Sigmoid colon (tissue), 7 donors: ENCODE measurements at regions of chr11 and their contacts with region 1.

Region 1: GRCh38 chr11:116276051-116277044 is 496.4 kb downstream of the BUD13 start:
- DNase-seq: peak; percentile 85
- H3K4me3 ChIP-seq: peak overlapping the region in 3 of 4 donors; percentile 27 to 35 (median 30)
- H3K27ac ChIP-seq: no peak overlapping the region
- H3K4me1 ChIP-seq: peaks cover 0 to 12% (median 3%) of the 10 kb centered on the region in 4 donors
- H3K27me3 ChIP-seq: no peaks in the 10 kb centered on the region
- CTCF ChIP-seq: peak; percentile 91 to 98 (median 96)
- EP300 ChIP-seq: no peak
- POLR2A ChIP-seq: no peak

Region 2: GRCh38 chr11:115324581-115325432 is 951.5 kb before region 1 on chr11:
- intact Hi-C with region 1: loop called (anchors 2 kb)
- DNase-seq: no peak
- H3K4me3 ChIP-seq: no peak overlapping the region
- H3K27ac ChIP-seq: no peak overlapping the region
- H3K4me1 ChIP-seq: peaks cover 0 to 6% (median 2%) of the 10 kb centered on the region in 4 donors
- H3K27me3 ChIP-seq: no peaks in the 10 kb centered on the region
- CTCF ChIP-seq: peak; percentile 57 to 81 (median 68)
- EP300 ChIP-seq: no peak
- POLR2A ChIP-seq: no peak

Region 3: DNA sequence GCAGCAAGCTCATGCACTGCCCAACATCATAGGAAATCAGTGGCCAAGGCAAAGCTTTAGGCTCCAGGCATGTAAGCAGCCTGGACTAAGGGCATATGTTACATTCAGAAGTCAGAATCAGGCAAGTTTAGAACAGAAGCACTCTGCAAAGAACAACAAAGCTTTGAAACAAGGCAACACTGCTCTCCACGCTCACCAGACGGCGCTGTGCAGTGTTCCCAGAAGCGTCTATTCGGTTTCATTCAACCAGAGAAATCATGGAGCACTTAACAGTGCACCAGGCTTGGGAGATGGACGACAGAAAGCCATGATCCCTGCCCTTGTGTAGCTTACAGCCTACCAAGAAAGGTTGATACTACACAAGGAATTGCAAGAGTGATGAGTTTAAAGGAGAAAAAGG is 59.3 kb before region 1 on chr11:
- intact Hi-C with region 1: loop called (anchors 2 kb)
- DNase-seq: no peak
- H3K4me3 ChIP-seq: no peak overlapping the region
- H3K27ac ChIP-seq: no peak overlapping the region
- H3K4me1 ChIP-seq: no peaks in the 10 kb centered on the region
- H3K27me3 ChIP-seq: no peaks in the 10 kb centered on the region
- CTCF ChIP-seq: peak in 3 of 4 experiments; percentile 39 to 85 (median 45)
- EP300 ChIP-seq: no peak
- POLR2A ChIP-seq: no peak

Region 4: DNA sequence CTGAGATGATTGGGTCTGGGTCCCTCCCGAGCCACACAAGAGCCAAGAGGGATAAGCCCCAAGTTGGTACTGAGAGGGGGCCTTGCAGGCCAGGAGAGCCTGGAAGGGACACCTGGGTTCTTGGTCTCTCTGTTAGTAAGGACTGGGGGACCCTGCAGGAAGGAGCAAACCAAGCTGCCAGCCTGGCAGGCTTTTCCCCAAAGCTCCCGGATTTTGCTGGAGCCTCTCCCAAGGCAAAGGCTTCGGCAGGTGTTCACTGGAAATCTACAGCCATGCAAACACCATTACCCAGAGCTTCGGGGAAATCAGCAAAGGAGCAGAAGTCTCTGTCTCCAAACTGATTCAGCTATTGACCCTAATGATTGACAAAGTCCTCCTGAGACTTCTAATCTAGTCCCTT is 31.5 kb before region 1 on chr11:
- intact Hi-C with region 1: loop called (anchors 1 kb)
- DNase-seq: no peak
- H3K4me3 ChIP-seq: no peak overlapping the region
- H3K27ac ChIP-seq: peak overlapping the region in 2 of 4 donors; percentile 9 to 63
- H3K4me1 ChIP-seq: peaks cover 0 to 30% (median 21%) of the 10 kb centered on the region in 4 donors
- H3K27me3 ChIP-seq: peaks cover 0 to 7% (median 0%) of the 10 kb centered on the region in 3 donors
- CTCF ChIP-seq: no peak
- EP300 ChIP-seq: no peak
- POLR2A ChIP-seq: no peak